ENCODE measurements at regions of chr1 and their contacts with region 1.

Region 1: GRCh38 chr1:83583351-83584014 is 415.4 kb downstream of the TTLL7 start:
- DNase-seq: no peak
- ATAC-seq: peak; percentile 70
- H3K4me3 ChIP-seq: no peak overlapping the region
- H3K27ac ChIP-seq: no peak overlapping the region
- H3K4me1 ChIP-seq: no peaks in the 10 kb centered on the region
- H3K27me3 ChIP-seq: no peaks in the 10 kb centered on the region
- CTCF ChIP-seq: peak; percentile 30 to 37 (median 32); a peak in 5 of 6 replicates
- EP300 ChIP-seq: no peak
- POLR2A ChIP-seq: no peak
- RAD21 ChIP-seq: peak; percentile 70

Region 2: GRCh38 chr1:82775402-82776000 is 808.0 kb before region 1 on chr1:
- CTCF ChIA-PET with region 1: no interaction called
- POLR2A ChIA-PET with region 1: no interaction called
- RAD21 ChIA-PET with region 1: no interaction called
- SMC1A ChIA-PET with region 1: no interaction called
- in situ Hi-C with region 1: no loop called
- intact Hi-C with region 1: loop called (anchors 10 kb)
- DNase-seq: no peak
- ATAC-seq: peak; percentile 20; the same call in 1 of the 3 replicates
- H3K4me3 ChIP-seq: no peak overlapping the region
- H3K27ac ChIP-seq: no peak overlapping the region
- H3K4me1 ChIP-seq: no peaks in the 10 kb centered on the region
- H3K27me3 ChIP-seq: no peaks in the 10 kb centered on the region
- CTCF ChIP-seq: peak; percentile 28 to 31 (median 28); a peak in 3 of 6 replicates
- EP300 ChIP-seq: no peak
- POLR2A ChIP-seq: no peak
- RAD21 ChIP-seq: peak; percentile 30; the same call in 1 of the 2 replicates

Measured in GM12878 (cell line).